Activated B cell treated with CpG ODN at 0.5 μM for 24 hours (primary cell): ENCODE measurements at regions of chr2 and their contacts with region 1.

Region 1: DNA sequence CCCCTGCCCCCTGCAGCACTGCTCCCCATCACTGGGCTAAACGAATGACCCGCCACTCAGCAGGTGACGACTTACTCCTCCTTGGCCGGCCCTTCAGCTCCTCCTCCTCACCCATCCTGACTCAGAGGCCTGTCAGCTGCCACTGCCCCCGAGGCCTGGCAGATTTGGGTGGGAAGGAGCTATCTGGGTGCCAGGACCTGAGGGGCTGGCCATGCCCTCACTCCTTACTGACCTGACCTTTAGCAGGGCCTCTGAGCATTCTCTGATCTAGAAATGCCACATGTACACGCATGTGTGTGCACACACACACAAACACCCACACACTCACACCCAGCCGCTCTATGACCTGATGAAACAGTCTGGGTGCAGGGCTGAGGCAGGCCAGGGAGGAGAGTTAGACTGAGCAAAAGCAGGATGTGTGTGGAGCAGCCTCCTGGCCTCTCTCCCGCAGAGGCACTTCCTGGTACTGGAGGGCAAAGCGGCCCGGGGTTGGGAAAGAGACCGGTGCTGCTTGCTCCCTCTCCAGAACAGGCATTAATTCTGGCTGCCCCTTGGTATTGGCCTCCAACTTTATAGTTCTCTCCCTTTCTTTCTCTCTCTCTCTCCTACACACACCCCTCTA is 68.0 kb downstream of the ZFP36L2 start:
- DNase-seq: no peak
- ATAC-seq: peak; percentile 9
- H3K4me3 Mint-ChIP-seq: peak overlapping the region; percentile 71
- H3K27ac Mint-ChIP-seq: peak overlapping the region; percentile 96
- H3K4me1 Mint-ChIP-seq: peaks cover 47% of the 10 kb centered on the region
- H3K27me3 Mint-ChIP-seq: no peaks in the 10 kb centered on the region
- CTCF ChIP-seq: no peak

Region 2: GRCh38 chr2:43178602-43179542 is 20.5 kb after region 1 on chr2:
- CTCF ChIA-PET with region 1: no interaction called
- POLR2A ChIA-PET with region 1: interaction called, 5 read pairs
- intact Hi-C with region 1: loop called (anchors 1 kb)
- DNase-seq: no peak
- ATAC-seq: no peak
- H3K4me3 Mint-ChIP-seq: no peak overlapping the region
- H3K27ac Mint-ChIP-seq: no peak overlapping the region
- H3K4me1 Mint-ChIP-seq: peaks cover 53% of the 10 kb centered on the region
- H3K27me3 Mint-ChIP-seq: no peaks in the 10 kb centered on the region
- CTCF ChIP-seq: no peak

Region 3: DNA sequence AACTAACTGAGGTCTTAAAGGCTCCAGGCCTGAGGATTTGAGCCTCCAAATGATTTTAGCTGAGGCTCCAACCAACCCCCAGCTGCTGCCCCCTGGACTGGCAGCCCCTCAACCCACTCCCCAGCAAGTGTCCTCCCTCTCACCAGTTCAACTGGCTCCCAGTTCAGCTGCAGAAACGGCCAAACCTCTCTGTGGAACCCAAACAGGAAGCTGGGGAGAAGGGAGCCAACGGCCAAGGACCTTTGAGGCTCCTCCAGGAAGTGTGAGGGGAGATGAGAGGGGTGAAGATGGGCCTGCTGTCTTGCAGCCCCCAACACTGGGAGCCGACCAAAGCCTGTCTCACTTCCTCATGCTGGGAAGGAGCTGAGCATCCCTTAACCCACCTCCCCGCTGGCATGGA is 43.1 kb after region 1 on chr2:
- CTCF ChIA-PET with region 1: no interaction called
- POLR2A ChIA-PET with region 1: no interaction called
- intact Hi-C with region 1: no loop called
- DNase-seq: no peak
- ATAC-seq: no peak
- H3K4me3 Mint-ChIP-seq: no peak overlapping the region
- H3K27ac Mint-ChIP-seq: no peak overlapping the region
- H3K4me1 Mint-ChIP-seq: peaks cover 15% of the 10 kb centered on the region
- H3K27me3 Mint-ChIP-seq: no peaks in the 10 kb centered on the region
- CTCF ChIP-seq: no peak